ENCODE measurements at regions of chr4 and their contacts with region 1.

Region 1: GRCh38 chr4:152039023-152039481 is 278.2 kb upstream of the GATB start:
- DNase-seq: peak; percentile 98
- ATAC-seq: peak; percentile 81
- H3K4me3 ChIP-seq: no peak overlapping the region
- H3K27ac ChIP-seq: peak overlapping the region; percentile 95
- H3K4me1 ChIP-seq: peaks cover 12% of the 10 kb centered on the region; the same call in 1 of the 2 replicates
- H3K27me3 ChIP-seq: no peaks in the 10 kb centered on the region
- CTCF ChIP-seq: no peak
- POLR2A ChIP-seq: peak; percentile 64; the same call in 1 of the 2 replicates
- RAD21 ChIP-seq: 0 out of 2 replicates have a peak, but pooled peaks have one; percentile 15

Region 2: DNA sequence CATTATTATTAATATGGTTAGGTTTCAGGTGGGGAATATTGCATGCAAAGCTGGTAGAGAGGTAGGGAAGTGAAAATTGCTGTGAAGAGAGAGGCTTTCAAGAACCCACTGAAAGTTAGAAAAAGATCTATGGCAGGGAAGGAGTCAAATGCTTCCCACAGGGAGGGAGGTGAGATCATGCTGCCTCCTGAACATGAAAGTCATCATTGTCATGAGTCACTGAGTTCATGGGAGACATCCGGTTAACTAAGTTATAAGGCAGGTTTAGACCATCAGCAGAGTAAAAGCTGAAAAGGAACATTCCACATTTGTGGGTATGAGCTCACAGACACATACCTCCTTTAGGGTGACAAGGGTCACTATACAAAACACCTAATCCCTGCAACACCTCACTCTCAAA is 294.4 kb before region 1 on chr4:
- CTCF ChIA-PET with region 1: no interaction called
- POLR2A ChIA-PET with region 1: no interaction called
- dilution Hi-C with region 1: no loop called
- in situ Hi-C with region 1: no loop called
- intact Hi-C with region 1: loop called (anchors 5 kb)
- DNase-seq: peak; percentile 97
- ATAC-seq: peak; percentile 88
- H3K4me3 ChIP-seq: no peak overlapping the region
- H3K27ac ChIP-seq: no peak overlapping the region
- H3K4me1 ChIP-seq: peaks cover 7% of the 10 kb centered on the region
- H3K27me3 ChIP-seq: no peaks in the 10 kb centered on the region
- CTCF ChIP-seq: no peak
- POLR2A ChIP-seq: no peak
- RAD21 ChIP-seq: no peak

Region 3: GRCh38 chr4:152106113-152106763 is 67.2 kb after region 1 on chr4:
- CTCF ChIA-PET with region 1: no interaction called
- POLR2A ChIA-PET with region 1: no interaction called
- dilution Hi-C with region 1: no loop called
- in situ Hi-C with region 1: no loop called
- intact Hi-C with region 1: loop called (anchors 2 kb)
- DNase-seq: peak; percentile 97
- ATAC-seq: peak; percentile 86
- H3K4me3 ChIP-seq: no peak overlapping the region
- H3K27ac ChIP-seq: peak overlapping the region; percentile 33; the same call in 1 of the 2 replicates
- H3K4me1 ChIP-seq: peaks cover 9% of the 10 kb centered on the region
- H3K27me3 ChIP-seq: no peaks in the 10 kb centered on the region
- CTCF ChIP-seq: no peak
- POLR2A ChIP-seq: no peak
- RAD21 ChIP-seq: no peak

Region 4: GRCh38 chr4:152255437-152256011 is 216.5 kb after region 1 on chr4:
- CTCF ChIA-PET with region 1: no interaction called
- POLR2A ChIA-PET with region 1: no interaction called
- dilution Hi-C with region 1: no loop called
- in situ Hi-C with region 1: no loop called
- intact Hi-C with region 1: loop called (anchors 5 kb)
- DNase-seq: peak; percentile 27
- ATAC-seq: peak; percentile 10; the same call in 1 of the 2 replicates
- H3K4me3 ChIP-seq: no peak overlapping the region
- H3K27ac ChIP-seq: no peak overlapping the region
- H3K4me1 ChIP-seq: peaks cover 18% of the 10 kb centered on the region
- H3K27me3 ChIP-seq: no peaks in the 10 kb centered on the region
- CTCF ChIP-seq: no peak
- POLR2A ChIP-seq: no peak
- RAD21 ChIP-seq: no peak